Naive thymus-derived CD4-positive, alpha-beta T cell (primary cell): ENCODE measurements at regions of chr7 and their contacts with region 1.

Region 1: GRCh38 chr7:103296901-103297836 is at the start of gene PMPCB:
- DNase-seq: peak; percentile 87 to 95 (median 94)
- ATAC-seq: peak; percentile 100
- H3K4me3 ChIP-seq: peak within 1 kb of the TSS; percentile 80
- H3K4me3 Mint-ChIP-seq: peak within 1 kb of the TSS; percentile 83 to 96 (median 90)
- H3K27ac ChIP-seq: peak within 1 kb of the TSS; percentile 90
- H3K27ac Mint-ChIP-seq: peak within 1 kb of the TSS; percentile 80 to 94 (median 92)
- H3K4me1 ChIP-seq: peaks cover 16 to 19% of the 10 kb centered on the region in 2 donors
- H3K4me1 Mint-ChIP-seq: peaks cover 18 to 50% (median 36%) of the 10 kb centered on the region in 7 donors
- H3K27me3 ChIP-seq: no peaks in the 10 kb centered on the region
- H3K27me3 Mint-ChIP-seq: peaks cover 0 to 9% (median 0%) of the 10 kb centered on the region in 5 donors
- total RNA-seq, gene PMPCB: 55.2 to 94.1 (median 68.3) TPM

Region 2: GRCh38 chr7:103074519-103075336 is 222.4 kb before region 1 on chr7 and contains the starts of genes ARMC10 and FBXL13:
- CTCF ChIA-PET with region 1: no interaction called
- POLR2A ChIA-PET with region 1: no interaction called
- intact Hi-C with region 1: loop called in 1 of 2 experiments (anchors 5 kb)
- DNase-seq: peak; percentile 86 to 93 (median 88)
- ATAC-seq: peak; percentile 93
- H3K4me3 ChIP-seq: peak within 1 kb of the TSS; percentile 77
- H3K4me3 Mint-ChIP-seq: peak within 1 kb of the TSS; percentile 94 to 100 (median 97)
- H3K27ac ChIP-seq: peak within 1 kb of the TSS; percentile 81
- H3K27ac Mint-ChIP-seq: peak within 1 kb of the TSS; percentile 85 to 98 (median 93)
- H3K4me1 ChIP-seq: peaks cover 14 to 18% of the 10 kb centered on the region in 2 donors
- H3K4me1 Mint-ChIP-seq: peaks cover 21 to 53% (median 47%) of the 10 kb centered on the region in 7 donors
- H3K27me3 ChIP-seq: no peaks in the 10 kb centered on the region
- H3K27me3 Mint-ChIP-seq: peaks cover 0 to 2% (median 0%) of the 10 kb centered on the region in 5 donors
- total RNA-seq, gene ARMC10: 13.6 to 36.4 (median 27.5) TPM
- total RNA-seq, gene FBXL13: 0.44 to 1.9 (median 1.2) TPM

Region 3: GRCh38 chr7:103148994-103149807 is 148.0 kb before region 1 on chr7 and contains the start of gene NAPEPLD:
- CTCF ChIA-PET with region 1: interaction called, 3 read pairs
- POLR2A ChIA-PET with region 1: no interaction called
- intact Hi-C with region 1: loop called in 1 of 2 experiments (anchors 1 kb)
- DNase-seq: peak; percentile 61 to 87 (median 83)
- ATAC-seq: peak; percentile 93
- H3K4me3 ChIP-seq: peak within 1 kb of the TSS; percentile 87
- H3K4me3 Mint-ChIP-seq: peak within 1 kb of the TSS; percentile 91 to 99 (median 97)
- H3K27ac ChIP-seq: peak within 1 kb of the TSS; percentile 84
- H3K27ac Mint-ChIP-seq: peak within 1 kb of the TSS; percentile 91 to 99 (median 97)
- H3K4me1 ChIP-seq: peaks cover 0 to 23% of the 10 kb centered on the region in 2 donors
- H3K4me1 Mint-ChIP-seq: peaks cover 19 to 49% (median 46%) of the 10 kb centered on the region in 7 donors
- H3K27me3 ChIP-seq: no peaks in the 10 kb centered on the region
- H3K27me3 Mint-ChIP-seq: no peaks in the 10 kb centered on the region
- total RNA-seq, gene NAPEPLD: 2.9 to 19.7 (median 14.0) TPM

Region 4: GRCh38 chr7:103344453-103345149 is 47.4 kb after region 1 on chr7 and contains the start of gene DNAJC2:
- CTCF ChIA-PET with region 1: interaction called, 4 read pairs
- POLR2A ChIA-PET with region 1: interaction called, 18 read pairs
- intact Hi-C with region 1: loop called (anchors 1 kb)
- DNase-seq: peak; percentile 61 to 88 (median 83)
- ATAC-seq: peak; percentile 94
- H3K4me3 ChIP-seq: peak within 1 kb of the TSS; percentile 97
- H3K4me3 Mint-ChIP-seq: peak within 1 kb of the TSS; percentile 93 to 100 (median 98)
- H3K27ac ChIP-seq: peak within 1 kb of the TSS; percentile 86
- H3K27ac Mint-ChIP-seq: peak within 1 kb of the TSS; percentile 93 to 99 (median 97)
- H3K4me1 ChIP-seq: peaks cover 22 to 26% of the 10 kb centered on the region in 2 donors
- H3K4me1 Mint-ChIP-seq: peaks cover 31 to 84% (median 72%) of the 10 kb centered on the region in 7 donors
- H3K27me3 ChIP-seq: no peaks in the 10 kb centered on the region
- H3K27me3 Mint-ChIP-seq: no peaks in the 10 kb centered on the region
- total RNA-seq, gene DNAJC2: 30.1 to 52.7 (median 38.0) TPM

Region 5: DNA sequence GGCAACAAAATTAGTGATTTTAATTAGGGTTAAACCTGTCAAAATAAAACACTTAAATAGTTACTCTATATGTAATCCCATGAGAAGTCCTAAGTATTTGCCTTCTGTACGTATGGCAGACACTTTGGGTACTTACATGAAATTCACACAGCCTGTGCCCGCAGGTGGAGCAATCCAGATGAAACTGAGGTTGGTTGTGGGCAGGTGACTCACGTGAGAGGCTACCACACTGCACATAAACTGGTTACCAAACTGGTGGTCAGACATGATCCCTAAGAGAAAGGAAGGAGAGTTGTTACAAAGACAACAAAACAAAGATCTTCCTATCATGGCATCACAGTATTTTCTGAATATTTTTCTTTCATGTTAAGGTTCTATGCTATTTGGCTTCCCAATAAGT is 536.2 kb after region 1 on chr7:
- CTCF ChIA-PET with region 1: no interaction called
- POLR2A ChIA-PET with region 1: no interaction called
- intact Hi-C with region 1: no loop called
- DNase-seq: no peak
- ATAC-seq: no peak
- H3K4me3 ChIP-seq: no peak overlapping the region
- H3K4me3 Mint-ChIP-seq: no peak overlapping the region
- H3K27ac ChIP-seq: no peak overlapping the region
- H3K27ac Mint-ChIP-seq: no peak overlapping the region
- H3K4me1 ChIP-seq: no peaks in the 10 kb centered on the region
- H3K4me1 Mint-ChIP-seq: no peaks in the 10 kb centered on the region
- H3K27me3 ChIP-seq: no peaks in the 10 kb centered on the region
- H3K27me3 Mint-ChIP-seq: peaks cover 0 to 19% (median 13%) of the 10 kb centered on the region in 5 donors

Region 6: GRCh38 chr7:104156842-104157277 is 859.7 kb after region 1 on chr7:
- CTCF ChIA-PET with region 1: no interaction called
- POLR2A ChIA-PET with region 1: no interaction called
- intact Hi-C with region 1: loop called (anchors 5 kb)
- DNase-seq: peak in 1 of 9 donors; percentile 28
- ATAC-seq: no peak
- H3K4me3 ChIP-seq: no peak overlapping the region
- H3K4me3 Mint-ChIP-seq: no peak overlapping the region
- H3K27ac ChIP-seq: no peak overlapping the region
- H3K27ac Mint-ChIP-seq: no peak overlapping the region
- H3K4me1 ChIP-seq: no peaks in the 10 kb centered on the region
- H3K4me1 Mint-ChIP-seq: peaks cover 0 to 6% (median 4%) of the 10 kb centered on the region in 7 donors
- H3K27me3 ChIP-seq: no peaks in the 10 kb centered on the region
- H3K27me3 Mint-ChIP-seq: no peaks in the 10 kb centered on the region

Region 7: GRCh38 chr7:104207731-104208420 is 910.7 kb after region 1 on chr7 and contains the start of gene ORC5:
- CTCF ChIA-PET with region 1: no interaction called
- POLR2A ChIA-PET with region 1: no interaction called
- intact Hi-C with region 1: loop called (anchors 1 to 5 kb)
- DNase-seq: peak; percentile 57 to 85 (median 74)
- ATAC-seq: peak; percentile 99
- H3K4me3 ChIP-seq: peak within 1 kb of the TSS; percentile 93
- H3K4me3 Mint-ChIP-seq: peak within 1 kb of the TSS; percentile 91 to 99 (median 95)
- H3K27ac ChIP-seq: peak within 1 kb of the TSS; percentile 88
- H3K27ac Mint-ChIP-seq: peak within 1 kb of the TSS; percentile 88 to 98 (median 93)
- H3K4me1 ChIP-seq: peaks cover 15 to 17% of the 10 kb centered on the region in 2 donors
- H3K4me1 Mint-ChIP-seq: peaks cover 18 to 57% (median 38%) of the 10 kb centered on the region in 7 donors
- H3K27me3 ChIP-seq: no peaks in the 10 kb centered on the region
- H3K27me3 Mint-ChIP-seq: peaks cover 13 to 25% (median 19%) of the 10 kb centered on the region in 5 donors
- total RNA-seq, gene ORC5: 15.9 to 28.0 (median 24.5) TPM

Region 8: GRCh38 chr7:104848138-104848990 is 1551.2 kb after region 1 on chr7:
- CTCF ChIA-PET with region 1: no interaction called
- POLR2A ChIA-PET with region 1: no interaction called
- intact Hi-C with region 1: loop called in 1 of 2 experiments (anchors 10 kb)
- DNase-seq: peak in 8 of 9 donors; percentile 14 to 60 (median 33)
- ATAC-seq: peak; percentile 61
- H3K4me3 ChIP-seq: no peak overlapping the region
- H3K4me3 Mint-ChIP-seq: no peak overlapping the region
- H3K27ac ChIP-seq: no peak overlapping the region
- H3K27ac Mint-ChIP-seq: no peak overlapping the region
- H3K4me1 ChIP-seq: no peaks in the 10 kb centered on the region
- H3K4me1 Mint-ChIP-seq: peaks cover 0 to 2% (median 0%) of the 10 kb centered on the region in 7 donors
- H3K27me3 ChIP-seq: no peaks in the 10 kb centered on the region
- H3K27me3 Mint-ChIP-seq: peaks cover 5 to 26% (median 12%) of the 10 kb centered on the region in 5 donors